PC-9 (cell line): ENCODE measurements at regions of chr12 and their contacts with region 1.

Region 1: DNA sequence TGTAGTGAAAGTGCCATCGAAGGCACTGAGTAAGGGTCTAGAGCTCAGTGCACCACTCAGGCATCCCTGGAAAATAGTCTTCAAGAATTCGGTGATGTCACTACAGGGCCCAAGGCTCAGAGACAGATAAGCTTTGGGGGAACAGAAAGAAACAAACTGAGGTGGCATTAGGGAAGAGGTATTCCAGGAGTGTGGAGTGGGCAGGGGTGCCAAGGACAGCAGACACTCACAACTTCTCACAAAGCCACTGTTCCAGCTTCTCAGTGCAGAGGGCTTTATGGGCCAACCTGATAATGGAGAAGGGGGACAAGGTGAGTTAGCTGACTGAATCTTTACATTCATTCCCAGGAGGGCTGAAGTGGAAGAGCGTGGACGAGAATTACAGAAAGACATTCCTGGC is 2.1 kb downstream of the LALBA start:
- DNase-seq: no peak
- H3K4me3 ChIP-seq: no peak overlapping the region
- H3K27ac ChIP-seq: no peak overlapping the region
- H3K4me1 ChIP-seq: no peaks in the 10 kb centered on the region
- H3K27me3 ChIP-seq: peaks cover 87% of the 10 kb centered on the region
- CTCF ChIP-seq: no peak

Region 2: DNA sequence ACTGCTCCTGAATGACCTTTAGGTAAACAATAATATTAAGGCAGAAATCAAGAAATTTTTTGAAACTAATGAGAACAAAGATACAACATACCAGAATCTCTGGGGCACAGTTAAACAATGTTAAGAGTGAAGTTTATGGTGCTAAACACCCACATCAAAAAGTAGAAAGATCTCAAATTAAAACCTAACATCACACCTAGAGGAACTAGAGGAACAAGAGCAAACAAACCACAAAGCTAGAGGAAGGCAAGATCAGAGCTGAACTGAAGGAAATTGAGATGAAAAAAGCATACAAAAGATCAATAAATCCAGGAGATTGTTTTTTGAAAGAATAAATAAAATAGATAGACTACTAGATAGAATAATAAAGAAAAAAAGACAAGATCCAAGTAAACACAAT is 35.1 kb before region 1 on chr12:
- CTCF ChIA-PET with region 1: no interaction called
- POLR2A ChIA-PET with region 1: no interaction called
- intact Hi-C with region 1: no loop called
- DNase-seq: no peak
- H3K4me3 ChIP-seq: no peak overlapping the region
- H3K27ac ChIP-seq: no peak overlapping the region
- H3K4me1 ChIP-seq: no peaks in the 10 kb centered on the region
- H3K27me3 ChIP-seq: peaks cover 30% of the 10 kb centered on the region
- CTCF ChIP-seq: no peak

Region 3: DNA sequence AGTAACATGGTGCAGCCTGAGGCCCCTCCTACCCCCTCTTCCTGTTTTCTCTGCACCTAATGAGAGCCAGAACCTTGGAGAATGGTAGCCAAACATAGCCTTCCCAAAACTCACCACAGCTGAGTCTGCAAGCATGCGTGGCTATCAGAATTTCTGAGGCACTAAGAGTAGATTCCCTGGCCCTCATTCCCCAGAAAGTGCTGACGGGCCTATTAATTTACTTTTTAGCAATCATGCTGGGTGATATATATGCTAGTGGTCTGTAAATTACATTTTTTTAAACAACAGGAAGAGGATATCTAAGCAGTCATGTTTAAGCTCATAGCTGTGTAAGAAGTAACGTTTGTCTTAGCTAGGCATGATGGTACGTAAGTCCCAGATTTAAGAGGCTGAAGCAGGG is 84.0 kb after region 1 on chr12:
- CTCF ChIA-PET with region 1: no interaction called
- POLR2A ChIA-PET with region 1: interaction called, 10 read pairs
- intact Hi-C with region 1: no loop called
- DNase-seq: no peak
- H3K4me3 ChIP-seq: no peak overlapping the region
- H3K27ac ChIP-seq: no peak overlapping the region
- H3K4me1 ChIP-seq: no peaks in the 10 kb centered on the region
- H3K27me3 ChIP-seq: no peaks in the 10 kb centered on the region
- CTCF ChIP-seq: no peak

Region 4: DNA sequence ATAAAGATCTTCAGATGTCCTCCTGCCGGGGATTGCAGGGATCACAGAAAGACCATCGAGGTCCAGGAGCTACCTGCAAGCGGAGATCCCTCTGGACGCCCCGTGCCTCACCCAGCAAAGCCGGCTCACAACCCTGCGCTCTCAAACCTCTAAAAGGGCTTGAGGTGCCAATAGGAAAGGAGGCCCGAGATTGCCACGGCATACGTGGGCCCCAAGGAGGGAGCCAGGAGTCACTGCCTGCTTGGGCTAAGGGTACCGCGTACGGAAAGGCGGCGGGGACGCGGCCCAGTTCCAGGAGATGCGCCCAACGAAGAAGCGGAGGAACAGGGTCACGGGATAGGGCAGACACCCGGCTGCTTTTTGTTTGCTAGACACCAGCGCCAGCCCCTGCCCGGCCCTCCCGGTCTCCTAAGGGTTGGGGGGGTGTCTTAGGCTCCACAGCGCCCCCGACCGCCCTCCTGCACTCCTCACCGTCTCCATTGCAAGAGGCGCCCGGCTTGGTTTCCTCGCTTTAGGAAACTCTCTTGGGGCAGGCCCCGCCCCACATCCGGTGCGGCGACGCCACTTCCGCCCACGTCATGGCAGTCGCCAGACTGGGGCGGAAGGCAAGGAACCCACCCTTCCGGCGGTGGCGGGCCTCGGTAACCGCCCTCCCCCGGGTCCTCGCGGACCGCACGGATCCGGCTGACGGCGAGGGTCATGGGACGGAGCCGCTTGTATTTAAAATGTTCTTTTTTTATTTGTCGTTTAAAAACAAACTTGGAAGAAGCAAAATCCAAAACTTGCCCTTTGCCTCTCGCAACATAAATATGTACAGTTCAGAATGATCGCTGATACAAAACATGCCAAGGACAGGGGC is 450.8 kb after region 1 on chr12 and contains the start of gene PRKAG1:
- CTCF ChIA-PET with region 1: no interaction called
- POLR2A ChIA-PET with region 1: no interaction called
- intact Hi-C with region 1: no loop called
- DNase-seq: peak; percentile 87 to 93
- H3K4me3 ChIP-seq: peak within 1 kb of the TSS; percentile 65
- H3K27ac ChIP-seq: peak within 1 kb of the TSS; percentile 91
- H3K4me1 ChIP-seq: peaks cover 14% of the 10 kb centered on the region
- H3K27me3 ChIP-seq: no peaks in the 10 kb centered on the region
- CTCF ChIP-seq: no peak; the same call in 1 of the 2 replicates
- total RNA-seq, gene PRKAG1: 48.8 and 53.6 TPM in 2 replicates

Region 5: GRCh38 chr12:49557917-49558215 is 990.1 kb after region 1 on chr12:
- CTCF ChIA-PET with region 1: no interaction called
- POLR2A ChIA-PET with region 1: no interaction called
- intact Hi-C with region 1: no loop called
- DNase-seq: no peak
- H3K4me3 ChIP-seq: no peak overlapping the region
- H3K27ac ChIP-seq: no peak overlapping the region
- H3K4me1 ChIP-seq: no peaks in the 10 kb centered on the region
- H3K27me3 ChIP-seq: no peaks in the 10 kb centered on the region
- CTCF ChIP-seq: no peak; the same call in 1 of the 2 replicates